Activated naive CD4-positive, alpha-beta T cell treated with anti-CD3 and anti-CD28 coated beads for 36 hours (primary cell): ENCODE measurements at regions of chr6 and their contacts with region 1.

Region 1: DNA sequence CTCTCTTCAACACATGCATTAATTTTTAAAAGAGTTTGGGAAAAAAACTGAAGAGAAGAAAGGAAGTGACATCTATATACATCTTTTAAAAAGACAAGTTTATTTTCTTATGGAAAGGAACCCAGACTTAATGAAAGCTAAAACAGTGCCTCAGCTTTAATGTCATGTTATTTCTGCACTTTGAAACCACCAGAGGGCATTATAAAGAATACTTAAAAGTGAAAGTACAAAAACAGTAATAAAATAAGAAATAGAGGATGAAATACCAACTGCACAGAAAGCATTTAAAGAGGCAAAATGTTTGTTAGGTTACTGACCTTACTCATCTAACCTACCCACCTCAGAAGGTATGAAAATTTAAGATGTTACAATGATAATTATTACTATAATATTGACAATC is 98.8 kb downstream of the HUS1B start:
- DNase-seq: no peak
- H3K4me3 Mint-ChIP-seq: no peak overlapping the region
- H3K27ac Mint-ChIP-seq: peak overlapping the region; percentile 59
- H3K4me1 Mint-ChIP-seq: peaks cover 51% of the 10 kb centered on the region
- H3K27me3 Mint-ChIP-seq: no peaks in the 10 kb centered on the region

Region 2: GRCh38 chr6:257031-257725 is 300.9 kb before region 1 on chr6:
- CTCF ChIA-PET with region 1: no interaction called
- intact Hi-C with region 1: no loop called
- DNase-seq: no peak
- H3K4me3 Mint-ChIP-seq: no peak overlapping the region
- H3K27ac Mint-ChIP-seq: no peak overlapping the region
- H3K4me1 Mint-ChIP-seq: peaks cover 57% of the 10 kb centered on the region
- H3K27me3 Mint-ChIP-seq: no peaks in the 10 kb centered on the region

Region 3: DNA sequence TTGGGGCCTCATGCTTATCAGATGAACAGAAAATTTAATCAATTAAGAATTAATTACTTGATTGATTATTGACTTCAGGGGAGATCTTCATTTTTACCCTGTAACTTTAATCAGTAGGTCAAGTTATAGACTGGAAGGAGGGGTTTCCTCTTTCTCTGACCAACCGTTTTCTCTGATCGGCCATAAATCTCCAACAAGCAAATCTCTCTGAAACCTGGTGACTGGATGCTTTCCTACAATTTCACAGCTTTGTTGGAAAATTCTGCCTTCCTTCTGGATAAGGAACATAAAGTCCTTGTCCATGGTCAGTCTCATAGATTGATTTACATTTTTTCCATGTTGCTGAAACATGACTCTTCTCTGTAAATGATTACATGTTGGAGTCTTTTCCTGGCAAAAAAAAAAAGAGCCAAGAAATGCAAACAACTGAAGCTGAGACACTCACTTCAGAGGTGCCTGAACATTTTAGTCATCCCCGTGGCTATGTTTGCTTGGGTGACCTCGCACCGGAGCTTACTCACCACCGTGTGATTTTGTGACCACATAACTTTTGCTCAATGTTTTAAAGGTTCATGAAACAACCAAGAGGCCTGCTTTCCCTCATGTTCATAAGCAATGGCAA is 135.5 kb before region 1 on chr6:
- CTCF ChIA-PET with region 1: no interaction called
- intact Hi-C with region 1: loop called (anchors 1 kb)
- DNase-seq: peak; percentile 91
- H3K4me3 Mint-ChIP-seq: no peak overlapping the region
- H3K27ac Mint-ChIP-seq: peak overlapping the region; percentile 81
- H3K4me1 Mint-ChIP-seq: peaks cover 31% of the 10 kb centered on the region
- H3K27me3 Mint-ChIP-seq: no peaks in the 10 kb centered on the region

Region 4: DNA sequence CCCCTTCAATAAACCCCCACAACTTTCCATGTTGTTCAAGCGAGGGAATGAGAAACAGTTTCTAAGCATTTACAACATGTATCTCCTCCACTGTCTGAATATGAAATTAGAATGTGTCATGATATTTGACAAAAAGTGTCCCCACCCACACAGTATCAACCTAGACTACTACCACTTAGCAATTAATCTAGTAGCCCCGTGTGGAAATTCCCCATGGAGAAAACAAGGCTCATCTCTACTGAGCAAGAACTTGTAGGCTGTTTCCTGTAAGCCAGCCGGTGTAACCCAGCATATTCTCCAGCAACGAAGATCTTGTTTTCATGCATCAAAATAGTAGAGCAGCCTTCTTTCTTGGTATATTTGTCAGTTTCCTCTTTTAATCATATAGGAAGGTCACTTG is 51.6 kb before region 1 on chr6:
- CTCF ChIA-PET with region 1: interaction called, 4 read pairs
- intact Hi-C with region 1: loop called (anchors 1 kb)
- DNase-seq: peak; percentile 89
- H3K4me3 Mint-ChIP-seq: peak overlapping the region; percentile 45
- H3K27ac Mint-ChIP-seq: peak overlapping the region; percentile 99
- H3K4me1 Mint-ChIP-seq: peaks cover 95% of the 10 kb centered on the region
- H3K27me3 Mint-ChIP-seq: no peaks in the 10 kb centered on the region

Region 5: GRCh38 chr6:524803-525202 is 33.3 kb before region 1 on chr6:
- CTCF ChIA-PET with region 1: no interaction called
- intact Hi-C with region 1: loop called (anchors 1 kb)
- DNase-seq: peak; percentile 75
- H3K4me3 Mint-ChIP-seq: peak overlapping the region; percentile 11
- H3K27ac Mint-ChIP-seq: peak overlapping the region; percentile 18
- H3K4me1 Mint-ChIP-seq: peaks cover 25% of the 10 kb centered on the region
- H3K27me3 Mint-ChIP-seq: no peaks in the 10 kb centered on the region